Activated CD4-positive, alpha-beta T cell treated with anti-CD3 and anti-CD28 coated beads, Interleukin-2, amount 10 ng/mL, durations not matched to agents 7 days and 5 days (primary cell): ENCODE measurements at regions of chr6 and their contacts with region 1.

Region 1: DNA sequence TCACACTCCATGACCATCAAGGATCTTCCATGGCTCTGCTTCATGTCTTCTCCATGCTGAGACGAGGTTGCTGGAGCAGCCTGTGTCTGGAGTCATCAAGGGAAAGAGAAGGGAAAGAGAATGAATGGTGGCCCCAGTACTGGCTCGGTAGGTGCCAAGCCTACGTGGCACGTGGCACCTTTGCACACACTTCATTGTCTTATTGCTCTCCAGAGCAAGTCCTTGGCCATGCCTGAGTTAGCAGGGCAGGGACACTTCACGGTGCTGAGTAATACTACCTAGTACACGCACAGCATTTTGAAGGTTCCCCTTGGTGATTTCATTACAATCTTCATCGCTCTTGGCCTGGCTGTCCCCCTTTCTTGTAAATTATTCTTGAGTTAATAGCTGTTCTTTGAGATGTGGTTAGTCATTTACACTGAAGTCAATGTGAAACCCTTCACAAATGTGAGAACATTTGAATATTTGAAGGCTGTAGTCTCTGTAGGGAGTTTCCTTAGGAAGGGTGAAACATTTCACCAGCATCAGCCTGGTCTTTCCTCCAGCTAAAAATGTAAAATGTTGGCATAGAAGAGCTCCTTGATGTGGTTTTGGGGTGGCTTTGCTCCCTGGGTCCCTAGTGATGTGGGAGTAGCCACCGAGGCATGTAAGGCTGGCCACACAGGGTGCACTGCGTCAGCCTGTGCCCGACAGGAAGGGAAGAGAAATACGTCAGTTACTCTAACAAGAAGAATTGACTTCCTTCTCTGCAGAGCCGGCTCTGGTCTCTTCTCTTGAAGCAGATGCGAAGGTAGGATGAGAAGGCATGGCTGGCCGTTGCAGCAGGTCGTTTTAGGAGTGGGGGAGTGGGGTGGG is at the start of gene SYTL3:
- DNase-seq: peak; percentile 84
- H3K4me3 Mint-ChIP-seq: peak within 1 kb of the TSS; percentile 73
- H3K27ac Mint-ChIP-seq: peak within 1 kb of the TSS; percentile 96
- H3K4me1 Mint-ChIP-seq: peaks cover 78% of the 10 kb centered on the region
- H3K27me3 Mint-ChIP-seq: no peaks in the 10 kb centered on the region
- total RNA-seq, gene SYTL3: 25.8 to 26.9 TPM

Region 2: DNA sequence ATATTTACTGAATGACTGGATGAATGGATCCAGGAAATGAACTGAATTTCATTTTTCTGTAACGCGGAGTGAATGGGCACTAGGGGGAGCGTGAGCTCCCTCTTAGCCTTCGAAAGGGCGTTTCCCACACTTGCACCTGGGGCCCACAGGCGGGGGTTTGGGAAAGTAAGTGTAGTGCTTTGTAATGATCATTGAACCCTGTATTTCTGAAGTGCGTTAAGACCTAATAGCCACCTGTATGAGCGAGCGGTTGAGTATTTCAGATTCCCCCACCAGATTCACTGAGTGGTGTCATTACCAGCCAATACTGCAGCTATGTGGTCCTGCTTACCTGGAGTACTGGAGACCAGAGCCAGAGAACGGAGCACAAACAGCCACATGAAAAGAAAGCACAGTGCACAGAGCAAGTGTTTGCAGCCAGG is 10.8 kb after region 1 on chr6:
- CTCF ChIA-PET with region 1: interaction called, 13 read pairs
- POLR2A ChIA-PET with region 1: no interaction called
- DNase-seq: peak; percentile 61
- H3K4me3 Mint-ChIP-seq: no peak overlapping the region
- H3K27ac Mint-ChIP-seq: peak overlapping the region; percentile 77
- H3K4me1 Mint-ChIP-seq: peaks cover 55% of the 10 kb centered on the region
- H3K27me3 Mint-ChIP-seq: no peaks in the 10 kb centered on the region

Region 3: DNA sequence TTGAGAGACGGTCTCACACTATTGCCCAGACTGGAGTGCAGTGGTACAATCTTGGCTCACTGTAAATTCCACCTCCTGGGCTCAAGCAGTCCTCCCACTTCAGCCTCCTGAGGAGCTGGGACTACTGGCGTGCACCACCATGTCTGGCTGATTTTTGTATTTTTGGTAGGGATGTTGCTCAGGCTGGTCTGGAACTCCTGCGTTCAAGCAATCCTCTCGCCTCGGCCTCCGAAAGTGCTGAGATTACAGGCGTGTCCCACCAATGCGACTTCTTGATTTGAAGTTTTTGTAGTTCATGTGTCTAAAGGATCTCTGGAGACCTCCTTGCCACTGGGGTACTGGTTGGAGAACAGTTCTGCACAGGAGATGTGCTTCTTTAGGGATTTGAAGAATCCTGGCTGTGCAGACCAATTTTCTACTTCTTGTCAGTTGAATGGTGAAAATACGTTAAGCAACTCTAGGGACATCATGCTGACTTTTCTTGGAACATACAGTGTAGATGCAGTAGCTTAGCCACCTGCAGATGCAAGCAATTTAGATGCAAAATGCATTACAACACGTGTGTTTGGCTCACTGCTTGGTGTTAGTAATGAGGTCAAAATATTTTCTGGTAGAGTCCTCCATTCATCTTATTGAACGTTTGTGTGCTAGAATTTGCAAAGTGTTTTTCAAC is 28.5 kb after region 1 on chr6:
- CTCF ChIA-PET with region 1: interaction called, 4 read pairs
- POLR2A ChIA-PET with region 1: interaction called, 15 read pairs
- DNase-seq: no peak
- H3K4me3 Mint-ChIP-seq: no peak overlapping the region
- H3K27ac Mint-ChIP-seq: no peak overlapping the region
- H3K4me1 Mint-ChIP-seq: peaks cover 2% of the 10 kb centered on the region
- H3K27me3 Mint-ChIP-seq: no peaks in the 10 kb centered on the region

Region 4: GRCh38 chr6:158686791-158687381 is 37.4 kb after region 1 on chr6:
- CTCF ChIA-PET with region 1: interaction called, 13 read pairs
- POLR2A ChIA-PET with region 1: interaction called, 5 read pairs
- DNase-seq: peak; percentile 62
- H3K4me3 Mint-ChIP-seq: no peak overlapping the region
- H3K27ac Mint-ChIP-seq: peak overlapping the region; percentile 75
- H3K4me1 Mint-ChIP-seq: peaks cover 55% of the 10 kb centered on the region
- H3K27me3 Mint-ChIP-seq: no peaks in the 10 kb centered on the region

Region 5: DNA sequence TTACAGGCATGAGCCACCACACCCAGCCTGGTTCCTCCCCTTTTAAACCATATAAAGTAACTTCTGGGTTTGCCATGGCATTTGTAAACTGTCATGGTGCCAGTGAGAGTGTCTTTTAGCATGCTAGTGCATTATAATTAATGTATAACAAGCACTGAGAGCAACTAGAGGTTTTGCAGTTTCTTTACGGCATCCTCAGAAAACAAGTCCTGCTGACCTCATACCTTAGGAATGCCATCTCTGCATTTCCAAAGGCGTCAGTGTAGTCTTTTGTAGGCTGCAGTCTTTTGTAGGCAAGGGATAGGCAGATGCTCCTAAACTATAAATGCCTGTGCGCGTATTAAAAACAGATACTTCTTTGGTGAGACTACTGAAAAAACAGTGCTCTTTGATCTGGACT is 244.7 kb after region 1 on chr6:
- CTCF ChIA-PET with region 1: no interaction called
- POLR2A ChIA-PET with region 1: no interaction called
- DNase-seq: no peak
- H3K4me3 Mint-ChIP-seq: no peak overlapping the region
- H3K27ac Mint-ChIP-seq: no peak overlapping the region
- H3K4me1 Mint-ChIP-seq: no peaks in the 10 kb centered on the region
- H3K27me3 Mint-ChIP-seq: no peaks in the 10 kb centered on the region